MCF 10A (cell line): ENCODE measurements at regions of chr2 and their contacts with region 1.

Region 1: GRCh38 chr2:61016808-61017555 is 538 bp upstream of the PEX13 start:
- DNase-seq: peak; percentile 92
- H3K4me3 Mint-ChIP-seq: peak overlapping the region; percentile 91
- H3K27ac Mint-ChIP-seq: peak overlapping the region; percentile 97
- H3K4me1 Mint-ChIP-seq: peaks cover 6% of the 10 kb centered on the region
- H3K27me3 Mint-ChIP-seq: no peaks in the 10 kb centered on the region
- CTCF ChIP-seq: no peak

Region 2: GRCh38 chr2:60581433-60582282 is 435.3 kb before region 1 on chr2:
- CTCF ChIA-PET with region 1: no interaction called
- POLR2A ChIA-PET with region 1: no interaction called
- intact Hi-C with region 1: no loop called
- DNase-seq: peak; percentile 56
- H3K4me3 Mint-ChIP-seq: peak overlapping the region; percentile 61
- H3K27ac Mint-ChIP-seq: no peak overlapping the region
- H3K4me1 Mint-ChIP-seq: peaks cover 9% of the 10 kb centered on the region
- H3K27me3 Mint-ChIP-seq: no peaks in the 10 kb centered on the region
- CTCF ChIP-seq: peak; percentile 94

Region 3: DNA sequence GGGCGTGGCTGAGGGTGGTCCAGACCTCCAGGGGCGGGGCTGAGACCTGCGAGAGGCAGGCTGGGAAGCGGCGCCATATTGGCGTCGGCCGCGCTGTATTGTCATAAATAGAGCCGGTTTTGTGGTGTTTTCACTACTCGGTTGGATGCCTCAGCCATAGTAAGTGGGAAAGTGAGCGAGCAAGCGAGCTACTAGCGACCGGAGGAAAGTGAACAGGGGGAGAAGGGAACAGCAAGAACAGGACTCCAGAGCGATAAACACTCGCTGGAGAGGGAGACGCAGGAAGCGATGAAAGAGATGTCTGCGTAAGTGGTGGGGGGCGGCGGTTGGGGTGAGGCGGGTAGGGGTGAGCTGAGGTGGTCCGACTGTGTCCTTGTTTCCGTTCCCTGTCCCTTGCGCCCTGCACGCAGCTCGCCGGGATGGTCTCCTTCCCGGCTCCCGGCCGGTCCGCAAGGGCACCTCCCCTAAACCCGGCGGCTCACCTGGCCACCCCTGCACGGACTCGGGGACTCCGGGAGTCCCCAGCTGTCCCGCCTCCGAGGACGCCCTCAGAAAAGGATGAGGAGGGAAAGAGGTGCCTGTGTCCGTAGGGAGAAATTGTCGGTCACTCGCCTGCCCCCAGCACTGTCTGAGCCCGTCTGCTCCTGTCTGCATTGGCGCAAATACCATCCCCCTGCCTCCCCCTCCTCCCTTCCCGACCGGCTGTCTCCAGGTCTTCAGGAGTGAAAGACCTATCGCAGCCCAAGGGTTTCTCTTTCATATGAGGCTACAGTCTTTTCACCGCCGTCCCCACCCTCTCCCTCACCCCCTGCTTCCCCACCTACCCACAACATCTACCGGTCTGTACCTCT is 260.6 kb before region 1 on chr2 and contains the start of gene PAPOLG:
- CTCF ChIA-PET with region 1: interaction called, 3 read pairs
- POLR2A ChIA-PET with region 1: interaction called, 14 read pairs
- intact Hi-C with region 1: no loop called
- DNase-seq: peak; percentile 95
- H3K4me3 Mint-ChIP-seq: peak within 1 kb of the TSS; percentile 100
- H3K27ac Mint-ChIP-seq: peak within 1 kb of the TSS; percentile 99
- H3K4me1 Mint-ChIP-seq: peaks cover 10% of the 10 kb centered on the region
- H3K27me3 Mint-ChIP-seq: no peaks in the 10 kb centered on the region
- CTCF ChIP-seq: no peak
- total RNA-seq, gene PAPOLG: 16.9 and 18.4 TPM in 2 replicates

Region 4: GRCh38 chr2:60948926-60949579 is 67.9 kb before region 1 on chr2:
- CTCF ChIA-PET with region 1: no interaction called
- POLR2A ChIA-PET with region 1: interaction called, 36 read pairs
- intact Hi-C with region 1: no loop called
- DNase-seq: peak; percentile 80
- H3K4me3 Mint-ChIP-seq: no peak overlapping the region
- H3K27ac Mint-ChIP-seq: peak overlapping the region; percentile 89
- H3K4me1 Mint-ChIP-seq: peaks cover 35% of the 10 kb centered on the region
- H3K27me3 Mint-ChIP-seq: no peaks in the 10 kb centered on the region
- CTCF ChIP-seq: no peak

Region 5: DNA sequence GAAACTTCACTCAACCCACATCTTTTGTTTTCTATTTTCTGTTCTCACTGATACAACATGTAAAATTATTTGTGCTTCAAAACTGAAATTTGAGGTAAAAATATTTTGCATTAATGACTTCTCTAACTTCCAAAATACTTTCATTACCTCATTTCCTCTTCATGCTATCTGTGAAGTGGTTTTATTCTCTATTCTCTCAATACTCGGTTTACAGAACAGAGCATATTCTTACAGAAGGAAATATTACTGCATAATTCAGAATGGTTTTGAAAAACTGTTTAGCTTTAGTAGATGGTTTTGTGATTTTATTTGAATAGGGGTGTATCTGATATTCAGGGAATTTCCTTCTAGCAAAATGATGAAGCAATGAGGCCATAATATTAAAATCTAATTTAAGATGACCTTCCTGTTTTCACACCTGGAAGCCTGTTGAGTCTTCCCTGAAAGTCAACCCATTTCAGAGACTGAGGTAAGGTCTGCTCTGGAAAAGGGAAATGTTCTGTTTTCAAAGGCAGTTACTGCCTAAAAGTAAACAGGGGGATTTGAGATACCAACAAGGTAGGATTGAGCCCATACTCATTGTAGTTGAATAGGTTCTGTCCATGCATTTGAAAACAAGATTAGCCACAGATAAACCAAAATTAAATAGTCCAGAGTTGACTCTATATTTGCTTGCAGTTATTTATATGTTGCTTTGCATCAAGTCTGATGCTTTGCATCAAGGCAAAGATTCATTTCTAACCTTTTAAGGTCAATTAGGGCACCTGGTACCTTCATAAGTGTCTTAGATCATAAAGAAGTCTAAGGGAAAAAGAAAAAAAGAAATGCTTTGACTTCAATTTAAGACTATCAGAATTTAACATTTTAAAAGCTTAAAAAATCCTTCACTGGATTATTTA is 50.2 kb before region 1 on chr2:
- CTCF ChIA-PET with region 1: no interaction called
- POLR2A ChIA-PET with region 1: interaction called, 88 read pairs
- intact Hi-C with region 1: no loop called
- DNase-seq: no peak
- H3K4me3 Mint-ChIP-seq: no peak overlapping the region
- H3K27ac Mint-ChIP-seq: no peak overlapping the region
- H3K4me1 Mint-ChIP-seq: no peaks in the 10 kb centered on the region
- H3K27me3 Mint-ChIP-seq: no peaks in the 10 kb centered on the region
- CTCF ChIP-seq: no peak

Region 6: GRCh38 chr2:61006486-61007105 is 10.4 kb before region 1 on chr2:
- CTCF ChIA-PET with region 1: no interaction called
- POLR2A ChIA-PET with region 1: interaction called, 36 read pairs
- intact Hi-C with region 1: no loop called
- DNase-seq: no peak
- H3K4me3 Mint-ChIP-seq: no peak overlapping the region
- H3K27ac Mint-ChIP-seq: no peak overlapping the region
- H3K4me1 Mint-ChIP-seq: no peaks in the 10 kb centered on the region
- H3K27me3 Mint-ChIP-seq: no peaks in the 10 kb centered on the region
- CTCF ChIP-seq: no peak

Region 7: DNA sequence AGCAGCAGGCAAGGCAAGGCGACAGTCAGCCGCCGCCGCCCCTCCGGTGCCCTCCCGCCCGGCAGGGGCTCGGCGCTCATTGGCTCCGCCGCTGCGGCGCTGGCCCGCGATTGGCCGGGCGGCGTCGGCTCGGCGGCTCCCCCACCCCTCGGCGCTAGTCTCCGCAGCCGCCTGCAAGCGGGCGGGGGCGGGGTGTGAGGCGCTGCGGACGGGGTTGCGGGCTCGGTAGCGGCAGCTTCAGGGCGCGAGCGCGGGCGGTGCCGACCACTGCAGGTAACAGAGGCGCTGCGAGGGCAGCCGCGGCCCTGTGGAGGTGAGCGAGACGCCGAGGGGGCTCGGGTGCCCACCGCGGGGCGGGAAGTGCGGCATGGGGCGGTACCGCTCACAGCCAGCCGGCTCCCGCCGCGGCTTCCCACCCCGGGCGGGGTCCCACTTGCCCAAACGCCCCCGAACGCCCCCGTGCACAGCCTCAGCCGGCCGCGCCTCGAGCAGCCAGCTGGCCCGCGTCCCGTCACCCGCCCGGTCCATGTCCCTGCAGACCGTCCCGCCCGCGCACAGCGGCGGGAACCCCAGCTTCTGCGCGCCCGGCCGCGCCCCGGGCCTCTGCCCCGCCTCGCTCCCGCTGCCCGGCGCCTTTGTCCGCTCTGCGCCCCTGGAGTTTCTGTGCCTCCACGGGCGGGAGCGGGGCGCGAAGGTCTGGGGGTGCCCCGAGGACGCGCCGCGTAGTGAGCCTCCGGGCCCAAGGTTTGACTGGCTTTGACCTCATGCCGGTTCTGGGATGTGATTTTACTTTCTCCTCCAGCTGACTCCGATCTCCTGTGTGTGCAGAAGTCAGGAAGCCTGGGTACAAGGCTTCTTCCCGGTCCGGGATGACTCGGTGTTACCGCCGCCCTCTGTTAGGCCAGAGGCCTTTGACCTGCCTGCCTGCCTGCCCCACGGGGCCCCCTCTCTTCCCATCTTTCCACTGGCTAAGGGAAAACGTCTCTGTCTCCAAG is 49.0 kb after region 1 on chr2 and contains the start of gene SANBR:
- CTCF ChIA-PET with region 1: no interaction called
- POLR2A ChIA-PET with region 1: interaction called, 27 read pairs
- intact Hi-C with region 1: loop called (anchors 1 kb)
- DNase-seq: peak; percentile 82
- H3K4me3 Mint-ChIP-seq: peak within 1 kb of the TSS; percentile 89
- H3K27ac Mint-ChIP-seq: peak within 1 kb of the TSS; percentile 61
- H3K4me1 Mint-ChIP-seq: no peaks in the 10 kb centered on the region
- H3K27me3 Mint-ChIP-seq: no peaks in the 10 kb centered on the region
- CTCF ChIP-seq: no peak
- total RNA-seq, gene SANBR: 5.2 and 8.3 TPM in 2 replicates

Region 8: DNA sequence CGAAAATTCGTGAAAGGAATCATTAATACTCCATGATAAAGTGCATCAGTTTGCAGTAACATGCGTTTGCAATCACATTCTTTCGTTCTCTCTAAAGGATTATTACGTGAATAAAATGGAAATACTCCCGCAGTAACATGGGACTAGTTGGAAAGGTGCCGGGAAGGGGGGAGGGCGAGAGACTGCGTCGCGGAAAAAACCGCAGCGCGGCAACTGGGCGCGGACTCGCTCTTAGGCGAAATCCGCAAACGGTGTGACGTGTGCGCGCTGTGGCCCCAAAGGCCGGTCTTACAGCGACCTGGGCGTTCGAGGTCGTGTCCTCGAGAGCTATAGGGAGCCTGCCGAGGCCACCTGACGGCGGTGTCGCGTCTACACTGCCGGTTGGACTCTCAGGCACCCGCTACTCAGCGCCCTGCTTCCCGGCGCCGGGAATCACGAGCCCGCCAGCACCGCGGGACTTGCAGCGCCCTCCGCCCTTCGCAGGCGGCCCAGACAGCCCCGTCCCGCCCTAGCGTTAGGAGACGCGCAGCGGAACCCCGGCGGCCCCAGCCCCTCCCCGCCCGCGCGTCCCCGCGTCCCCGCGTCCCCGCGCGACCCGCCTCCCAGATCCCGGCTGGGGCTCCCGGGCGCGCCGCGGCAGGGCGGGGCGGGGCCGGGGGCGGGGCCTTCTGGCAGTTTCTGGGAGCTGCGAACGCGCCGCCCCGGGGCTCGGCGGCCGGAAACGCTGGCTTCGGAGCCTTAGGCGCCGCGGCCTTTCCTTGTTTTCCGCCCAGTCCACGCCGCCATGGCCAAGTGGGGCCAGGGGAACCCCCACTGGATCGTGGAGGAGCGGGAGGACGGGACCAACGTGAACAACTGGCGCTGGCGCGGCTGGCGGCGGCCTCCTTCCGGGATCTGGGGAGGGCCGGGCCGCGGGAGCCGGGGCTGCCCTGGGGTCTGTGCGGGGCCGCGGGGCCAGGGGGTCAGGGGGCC is 160.1 kb after region 1 on chr2:
- CTCF ChIA-PET with region 1: interaction called, 3 read pairs
- POLR2A ChIA-PET with region 1: interaction called, 30 read pairs
- intact Hi-C with region 1: no loop called
- DNase-seq: peak; percentile 93
- H3K4me3 Mint-ChIP-seq: peak overlapping the region; percentile 81
- H3K27ac Mint-ChIP-seq: peak overlapping the region; percentile 91
- H3K4me1 Mint-ChIP-seq: peaks cover 45% of the 10 kb centered on the region
- H3K27me3 Mint-ChIP-seq: no peaks in the 10 kb centered on the region
- CTCF ChIP-seq: no peak

Region 9: DNA sequence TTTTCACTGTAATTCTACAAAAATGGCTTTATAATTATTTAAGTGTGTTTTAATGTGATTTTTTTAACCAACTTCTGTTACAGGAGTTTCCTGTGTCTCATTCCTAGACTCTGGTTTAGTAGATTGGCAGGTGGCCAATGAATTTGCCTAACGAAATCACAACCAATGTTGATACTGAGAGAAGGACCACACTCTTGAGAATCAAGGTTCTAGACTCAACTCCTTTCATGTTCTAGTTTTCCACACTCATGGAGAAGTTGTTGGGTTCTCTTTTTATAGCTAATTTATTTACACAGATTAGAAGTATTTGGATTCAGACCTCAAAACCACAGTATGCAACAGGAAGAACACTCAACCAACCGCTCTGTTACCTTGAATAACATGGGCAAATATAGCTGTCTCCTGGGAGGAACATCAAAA is 476.6 kb after region 1 on chr2:
- CTCF ChIA-PET with region 1: no interaction called
- POLR2A ChIA-PET with region 1: no interaction called
- intact Hi-C with region 1: no loop called
- DNase-seq: peak; percentile 40
- H3K4me3 Mint-ChIP-seq: no peak overlapping the region
- H3K27ac Mint-ChIP-seq: no peak overlapping the region
- H3K4me1 Mint-ChIP-seq: peaks cover 11% of the 10 kb centered on the region
- H3K27me3 Mint-ChIP-seq: no peaks in the 10 kb centered on the region
- CTCF ChIP-seq: no peak